ENCODE measurements at regions of chr6 and their contacts with region 1.

Region 1: DNA sequence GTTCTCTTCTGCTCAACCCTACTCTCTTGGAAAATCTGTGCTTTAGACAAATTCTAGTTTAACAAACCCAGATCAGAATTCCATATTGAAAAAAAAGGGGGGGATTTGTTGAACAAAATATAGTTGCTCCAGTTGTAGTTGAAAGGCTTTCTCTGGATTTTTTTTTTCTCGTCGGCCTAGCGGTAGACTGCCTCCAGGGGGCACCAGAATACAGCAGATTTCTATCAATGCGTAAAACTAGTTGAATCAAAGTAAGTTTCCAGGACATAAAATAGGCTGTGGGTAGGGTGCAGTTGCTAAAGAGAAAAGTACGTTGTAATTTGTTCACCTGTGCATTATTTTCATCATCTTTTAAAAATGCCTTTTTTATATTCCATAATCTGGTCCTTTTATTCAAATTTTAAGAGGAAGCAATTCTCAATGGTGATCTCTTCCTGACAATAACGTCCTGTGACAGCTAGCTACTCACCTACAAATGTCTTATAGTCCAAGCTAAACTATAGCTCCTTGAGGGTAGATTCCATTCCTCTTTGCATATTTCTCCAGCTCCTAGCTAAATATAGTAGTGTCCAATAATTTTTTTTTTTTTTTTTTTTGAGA is 105.4 kb downstream of the PERP start:
- DNase-seq: peak; percentile 76
- H3K4me3 Mint-ChIP-seq: no peak overlapping the region
- H3K27ac Mint-ChIP-seq: no peak overlapping the region
- H3K4me1 Mint-ChIP-seq: peaks cover 14% of the 10 kb centered on the region
- H3K27me3 Mint-ChIP-seq: peaks cover 3% of the 10 kb centered on the region

Region 2: GRCh38 chr6:137944793-137945498 is 56.9 kb before region 1 on chr6:
- CTCF ChIA-PET with region 1: interaction called, 14 read pairs
- POLR2A ChIA-PET with region 1: no interaction called
- intact Hi-C with region 1: no loop called
- DNase-seq: peak; percentile 24
- H3K4me3 Mint-ChIP-seq: no peak overlapping the region
- H3K27ac Mint-ChIP-seq: peak overlapping the region; percentile 47
- H3K4me1 Mint-ChIP-seq: peaks cover 40% of the 10 kb centered on the region
- H3K27me3 Mint-ChIP-seq: no peaks in the 10 kb centered on the region

Region 3: DNA sequence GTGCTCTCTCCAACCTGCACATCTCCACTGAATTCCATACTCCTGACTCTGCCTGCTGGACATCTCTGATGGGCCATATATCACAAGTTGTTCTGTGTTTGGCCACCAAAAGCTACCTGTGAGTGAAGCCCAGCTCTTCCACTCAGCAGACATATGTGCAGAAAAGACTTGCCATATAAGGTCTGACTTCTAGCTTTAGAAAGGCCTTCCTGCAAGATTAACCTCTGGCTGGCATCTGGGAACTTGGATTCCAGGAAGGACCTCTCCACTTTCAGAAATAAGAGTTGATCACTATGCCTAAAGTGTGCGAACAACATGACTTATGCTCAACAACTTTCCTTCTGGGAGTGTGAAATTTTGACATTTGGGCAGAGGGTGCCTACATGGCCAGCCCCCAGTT is 21.1 kb before region 1 on chr6:
- CTCF ChIA-PET with region 1: interaction called, 19 read pairs
- POLR2A ChIA-PET with region 1: no interaction called
- intact Hi-C with region 1: no loop called
- DNase-seq: no peak
- H3K4me3 Mint-ChIP-seq: no peak overlapping the region
- H3K27ac Mint-ChIP-seq: no peak overlapping the region
- H3K4me1 Mint-ChIP-seq: peaks cover 32% of the 10 kb centered on the region
- H3K27me3 Mint-ChIP-seq: no peaks in the 10 kb centered on the region

Region 4: GRCh38 chr6:138115877-138116660 is 114.2 kb after region 1 on chr6:
- CTCF ChIA-PET with region 1: interaction called, 35 read pairs
- POLR2A ChIA-PET with region 1: no interaction called
- intact Hi-C with region 1: no loop called
- DNase-seq: peak; percentile 44
- H3K4me3 Mint-ChIP-seq: no peak overlapping the region
- H3K27ac Mint-ChIP-seq: no peak overlapping the region
- H3K4me1 Mint-ChIP-seq: peaks cover 6% of the 10 kb centered on the region
- H3K27me3 Mint-ChIP-seq: peaks cover 23% of the 10 kb centered on the region

Region 5: DNA sequence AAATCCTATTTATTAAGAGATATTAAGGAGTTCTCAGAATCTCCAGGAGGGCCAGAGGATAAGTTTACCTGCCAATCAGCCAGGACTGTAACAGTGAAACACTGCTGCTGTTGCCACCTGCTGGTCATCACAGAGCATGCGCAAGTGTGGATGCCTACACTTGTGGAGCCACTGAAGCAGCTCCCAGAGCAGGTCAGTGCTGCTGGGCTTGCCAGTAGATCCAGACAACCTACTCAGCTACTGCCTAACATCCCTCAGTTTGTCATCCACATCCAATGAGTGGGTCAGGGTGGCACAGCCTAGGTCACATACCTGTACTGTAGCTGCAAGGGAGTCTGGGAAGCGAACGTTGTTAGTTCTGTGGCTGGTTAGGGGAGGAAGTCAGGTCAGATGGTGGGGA is 515.8 kb after region 1 on chr6:
- CTCF ChIA-PET with region 1: no interaction called
- POLR2A ChIA-PET with region 1: no interaction called
- intact Hi-C with region 1: loop called (anchors 5 kb)
- DNase-seq: peak; percentile 61
- H3K4me3 Mint-ChIP-seq: no peak overlapping the region
- H3K27ac Mint-ChIP-seq: no peak overlapping the region
- H3K4me1 Mint-ChIP-seq: peaks cover 7% of the 10 kb centered on the region
- H3K27me3 Mint-ChIP-seq: peaks cover 9% of the 10 kb centered on the region

Measured in activated CD4-positive, alpha-beta memory T cell treated with anti-CD3 and anti-CD28 coated beads for 36 hours (primary cell).